ENCODE measurements at regions of chr3 and their contacts with region 1.

Region 1: GRCh38 chr3:47989981-47990440 is 26.2 kb downstream of the MAP4 start:
- DNase-seq: peak; percentile 42 to 84
- ATAC-seq: peak; percentile 88 to 97 (median 94)
- H3K4me3 ChIP-seq: no peak overlapping the region
- H3K27ac ChIP-seq: peak overlapping the region in 3 of 10 donors; percentile 10 to 45 (median 39)
- H3K4me1 ChIP-seq: peaks cover 0 to 61% (median 29%) of the 10 kb centered on the region in 9 donors
- H3K27me3 ChIP-seq: no peaks in the 10 kb centered on the region
- CTCF ChIP-seq: peak; percentile 84 to 94 (median 92)

Region 2: DNA sequence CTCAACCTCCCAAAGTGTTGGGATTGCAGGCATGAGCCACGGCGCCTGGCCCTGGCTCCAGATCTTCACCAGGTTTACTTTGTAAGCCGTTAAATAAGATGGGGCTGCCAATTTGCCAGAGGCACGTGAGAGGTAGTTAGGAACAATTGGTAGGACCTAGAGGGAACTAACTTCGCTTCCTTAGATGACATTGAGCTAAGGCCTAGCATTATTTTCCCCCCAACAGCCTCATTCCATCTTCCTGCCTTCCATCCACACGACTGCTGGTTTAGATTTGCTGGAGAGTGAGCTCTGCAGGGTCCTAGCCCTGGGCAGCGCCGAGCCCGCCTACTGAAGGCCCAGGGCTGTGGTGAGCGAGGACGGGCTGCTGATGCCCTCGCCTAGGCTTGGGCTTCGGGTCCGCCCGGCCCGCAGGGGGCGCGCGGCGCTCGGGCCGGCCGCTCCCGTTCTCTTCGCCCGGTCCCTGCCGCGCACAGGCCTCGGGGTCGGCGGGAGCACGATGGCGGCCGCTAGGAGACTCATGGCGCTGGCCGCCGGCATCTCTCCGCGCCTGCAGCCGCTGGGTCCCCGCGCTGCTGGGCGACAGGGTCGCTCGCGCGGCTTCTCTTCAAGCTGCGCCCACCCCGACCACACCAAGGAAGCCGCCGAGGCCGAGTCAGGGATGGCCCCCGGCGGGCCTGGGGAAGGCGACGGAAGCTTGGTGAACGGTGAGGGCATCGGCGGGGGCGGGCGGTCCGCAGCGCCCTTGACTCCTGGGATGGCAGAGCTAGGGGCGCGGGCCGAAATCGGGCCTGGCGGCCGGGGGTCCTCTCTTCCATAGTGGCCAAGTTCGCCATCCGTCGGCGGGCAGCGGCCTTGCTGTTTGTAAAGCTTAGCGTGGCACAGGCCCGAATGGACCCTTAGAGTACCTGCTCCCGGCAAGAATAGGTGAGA is 165.2 kb before region 1 on chr3:
- intact Hi-C with region 1: loop called in 2 of 10 experiments (anchors 1 to 5 kb)
- DNase-seq: peak; percentile 56 to 81
- ATAC-seq: peak; percentile 97 to 99 (median 98)
- H3K4me3 ChIP-seq: peak overlapping the region; percentile 81 to 100 (median 93)
- H3K27ac ChIP-seq: peak overlapping the region; percentile 62 to 89 (median 84)
- H3K4me1 ChIP-seq: peaks cover 6 to 25% (median 23%) of the 10 kb centered on the region in 9 donors
- H3K27me3 ChIP-seq: no peaks in the 10 kb centered on the region
- CTCF ChIP-seq: peak; percentile 67 to 98 (median 89)

Region 3: GRCh38 chr3:47836986-47837385 is 153.0 kb before region 1 on chr3:
- intact Hi-C with region 1: loop called in 8 of 10 experiments (anchors 1 to 10 kb)
- DNase-seq: no peak
- ATAC-seq: no peak
- H3K4me3 ChIP-seq: no peak overlapping the region
- H3K27ac ChIP-seq: no peak overlapping the region
- H3K4me1 ChIP-seq: peaks cover 0 to 14% (median 0%) of the 10 kb centered on the region in 9 donors
- H3K27me3 ChIP-seq: no peaks in the 10 kb centered on the region
- CTCF ChIP-seq: no peak

Region 4: GRCh38 chr3:47849699-47850563 is 140.1 kb before region 1 on chr3:
- intact Hi-C with region 1: loop called in 3 of 10 experiments (anchors 5 to 10 kb)
- DNase-seq: no peak
- ATAC-seq: peak in 3 of 8 donors; percentile 3 to 10 (median 7)
- H3K4me3 ChIP-seq: no peak overlapping the region
- H3K27ac ChIP-seq: no peak overlapping the region
- H3K4me1 ChIP-seq: peaks cover 0 to 16% (median 4%) of the 10 kb centered on the region in 9 donors
- H3K27me3 ChIP-seq: no peaks in the 10 kb centered on the region
- CTCF ChIP-seq: peak in 7 of 9 donors; percentile 20 to 47 (median 35)

Region 5: DNA sequence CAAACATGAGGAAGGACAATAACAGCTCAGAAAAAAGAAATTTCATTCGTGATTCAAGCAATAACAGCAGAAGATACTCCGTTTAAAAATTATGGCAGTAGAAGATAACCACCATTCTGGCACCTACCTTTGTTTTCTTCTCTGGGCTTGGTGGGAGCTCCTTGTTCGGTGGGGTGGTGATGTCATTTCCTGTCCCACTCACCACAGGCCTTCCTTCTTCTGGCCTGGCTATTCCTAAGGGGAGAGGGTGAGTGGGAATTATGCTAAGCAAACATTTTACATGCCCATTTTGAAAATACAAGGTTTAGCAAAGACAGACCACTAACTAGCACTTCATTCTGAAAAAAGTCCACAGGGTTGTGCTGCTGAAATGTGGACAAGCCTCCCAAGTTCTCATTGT is 112.7 kb before region 1 on chr3:
- intact Hi-C with region 1: loop called in 1 of 10 experiments (anchors 5 kb)
- DNase-seq: no peak
- ATAC-seq: peak in 6 of 8 donors; percentile 18 to 60 (median 42)
- H3K4me3 ChIP-seq: no peak overlapping the region
- H3K27ac ChIP-seq: peak overlapping the region in 8 of 10 donors; percentile 2 to 54 (median 38)
- H3K4me1 ChIP-seq: peaks cover 0 to 68% (median 39%) of the 10 kb centered on the region in 9 donors
- H3K27me3 ChIP-seq: no peaks in the 10 kb centered on the region
- CTCF ChIP-seq: no peak